MCF 10A (cell line): ENCODE measurements at regions of chr16 and their contacts with region 1.

Region 1: GRCh38 chr16:15650019-15650697 is at the start of gene NDE1:
- DNase-seq: peak; percentile 90
- H3K4me3 Mint-ChIP-seq: peak within 1 kb of the TSS; percentile 100
- H3K27ac Mint-ChIP-seq: peak within 1 kb of the TSS; percentile 96
- H3K4me1 Mint-ChIP-seq: peaks cover 8% of the 10 kb centered on the region
- H3K27me3 Mint-ChIP-seq: no peaks in the 10 kb centered on the region
- CTCF ChIP-seq: no peak
- total RNA-seq, gene NDE1: 121 and 162 TPM in 2 replicates

Region 2: DNA sequence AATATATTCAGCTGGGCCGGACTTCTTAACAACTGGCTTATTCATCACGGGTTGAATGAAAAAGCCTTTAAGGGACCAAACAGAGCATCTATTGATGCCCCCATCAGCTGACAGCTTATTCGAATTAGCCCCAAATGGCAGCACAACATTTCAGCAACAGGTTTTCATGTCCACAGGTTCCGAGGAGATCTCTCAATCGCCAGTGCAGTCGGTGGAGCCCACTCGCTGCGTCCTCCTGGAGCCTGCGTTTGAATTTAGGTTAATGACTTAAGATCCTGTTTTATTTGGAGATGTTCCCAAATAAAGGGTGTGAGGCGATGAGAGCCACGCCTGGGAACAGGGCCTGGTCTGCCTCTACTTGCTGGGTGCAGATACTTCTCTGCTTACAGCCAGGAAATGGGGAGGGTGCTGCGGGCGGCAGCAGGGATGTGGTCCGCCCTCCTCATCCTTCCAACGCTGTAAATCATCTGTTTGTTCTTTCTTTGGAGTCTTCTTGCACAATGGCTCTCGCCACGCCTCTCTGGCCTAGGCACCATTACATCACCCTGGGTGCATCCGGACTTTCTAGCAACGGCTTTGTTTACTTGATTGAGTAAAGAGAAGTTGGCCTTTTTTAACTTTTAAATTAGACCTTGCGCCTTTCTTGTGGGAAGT is 22.5 kb after region 1 on chr16:
- CTCF ChIA-PET with region 1: interaction called, 16 read pairs
- POLR2A ChIA-PET with region 1: interaction called, 173 read pairs
- intact Hi-C with region 1: no loop called
- DNase-seq: peak; percentile 99
- H3K4me3 Mint-ChIP-seq: peak overlapping the region; percentile 63
- H3K27ac Mint-ChIP-seq: peak overlapping the region; percentile 99
- H3K4me1 Mint-ChIP-seq: peaks cover 30% of the 10 kb centered on the region
- H3K27me3 Mint-ChIP-seq: no peaks in the 10 kb centered on the region
- CTCF ChIP-seq: no peak

Region 3: GRCh38 chr16:15682105-15682570 is 32.0 kb after region 1 on chr16:
- CTCF ChIA-PET with region 1: interaction called, 3 read pairs
- POLR2A ChIA-PET with region 1: interaction called, 80 read pairs
- intact Hi-C with region 1: no loop called
- DNase-seq: peak; percentile 82
- H3K4me3 Mint-ChIP-seq: no peak overlapping the region
- H3K27ac Mint-ChIP-seq: no peak overlapping the region
- H3K4me1 Mint-ChIP-seq: no peaks in the 10 kb centered on the region
- H3K27me3 Mint-ChIP-seq: no peaks in the 10 kb centered on the region
- CTCF ChIP-seq: peak; percentile 44

Region 4: DNA sequence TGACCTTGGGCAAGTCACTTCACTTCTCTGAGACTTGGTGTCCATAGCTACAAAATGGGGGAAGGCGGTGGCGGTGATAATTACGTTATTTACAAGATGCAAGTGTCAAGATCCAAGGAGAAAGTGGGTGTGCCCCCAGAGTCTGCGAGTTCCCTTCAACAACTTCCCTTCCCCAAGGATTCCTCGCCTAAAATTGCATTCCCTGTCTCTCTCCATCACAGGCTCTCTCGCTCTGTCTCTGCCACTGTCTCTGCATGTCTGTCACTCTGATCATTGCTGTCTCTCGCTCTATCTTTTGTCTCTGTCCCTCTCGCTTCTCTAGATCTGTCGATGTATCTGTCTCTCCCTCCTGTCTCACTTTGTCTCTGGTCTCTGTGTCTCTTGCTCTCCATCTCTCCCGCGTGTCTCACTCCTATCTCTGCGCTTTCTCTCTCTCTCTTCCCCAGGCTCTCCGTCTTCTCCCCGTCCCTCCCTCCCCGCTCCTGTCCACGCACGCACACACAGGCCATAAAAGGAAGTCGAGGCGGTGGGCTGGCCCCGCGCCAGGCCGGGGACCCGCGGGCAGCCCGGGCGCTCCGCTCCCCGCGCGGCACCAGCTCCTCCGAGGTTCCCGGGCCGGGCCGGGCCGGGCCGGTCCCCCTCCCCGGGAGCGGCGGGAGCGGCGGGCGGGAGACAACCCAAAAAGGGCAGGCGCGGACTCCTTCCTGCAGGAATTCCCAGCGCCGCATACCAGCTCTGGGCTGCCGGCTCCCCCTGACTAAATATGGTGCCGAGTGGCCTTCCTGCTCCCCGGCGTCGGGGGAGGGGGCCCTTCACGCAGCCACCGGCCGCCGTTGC is 207.8 kb after region 1 on chr16:
- CTCF ChIA-PET with region 1: no interaction called
- POLR2A ChIA-PET with region 1: no interaction called
- intact Hi-C with region 1: no loop called
- DNase-seq: no peak
- H3K4me3 Mint-ChIP-seq: peak overlapping the region; percentile 19
- H3K27ac Mint-ChIP-seq: no peak overlapping the region
- H3K4me1 Mint-ChIP-seq: peaks cover 7% of the 10 kb centered on the region
- H3K27me3 Mint-ChIP-seq: peaks cover 49% of the 10 kb centered on the region
- CTCF ChIP-seq: no peak

Region 5: GRCh38 chr16:16062023-16062932 is 412.1 kb after region 1 on chr16:
- CTCF ChIA-PET with region 1: no interaction called
- POLR2A ChIA-PET with region 1: no interaction called
- intact Hi-C with region 1: no loop called
- DNase-seq: no peak
- H3K4me3 Mint-ChIP-seq: no peak overlapping the region
- H3K27ac Mint-ChIP-seq: no peak overlapping the region
- H3K4me1 Mint-ChIP-seq: no peaks in the 10 kb centered on the region
- H3K27me3 Mint-ChIP-seq: no peaks in the 10 kb centered on the region
- CTCF ChIP-seq: no peak